GM13977 (cell line): ENCODE measurements at regions of chr16 and their contacts with region 1.

Region 1: DNA sequence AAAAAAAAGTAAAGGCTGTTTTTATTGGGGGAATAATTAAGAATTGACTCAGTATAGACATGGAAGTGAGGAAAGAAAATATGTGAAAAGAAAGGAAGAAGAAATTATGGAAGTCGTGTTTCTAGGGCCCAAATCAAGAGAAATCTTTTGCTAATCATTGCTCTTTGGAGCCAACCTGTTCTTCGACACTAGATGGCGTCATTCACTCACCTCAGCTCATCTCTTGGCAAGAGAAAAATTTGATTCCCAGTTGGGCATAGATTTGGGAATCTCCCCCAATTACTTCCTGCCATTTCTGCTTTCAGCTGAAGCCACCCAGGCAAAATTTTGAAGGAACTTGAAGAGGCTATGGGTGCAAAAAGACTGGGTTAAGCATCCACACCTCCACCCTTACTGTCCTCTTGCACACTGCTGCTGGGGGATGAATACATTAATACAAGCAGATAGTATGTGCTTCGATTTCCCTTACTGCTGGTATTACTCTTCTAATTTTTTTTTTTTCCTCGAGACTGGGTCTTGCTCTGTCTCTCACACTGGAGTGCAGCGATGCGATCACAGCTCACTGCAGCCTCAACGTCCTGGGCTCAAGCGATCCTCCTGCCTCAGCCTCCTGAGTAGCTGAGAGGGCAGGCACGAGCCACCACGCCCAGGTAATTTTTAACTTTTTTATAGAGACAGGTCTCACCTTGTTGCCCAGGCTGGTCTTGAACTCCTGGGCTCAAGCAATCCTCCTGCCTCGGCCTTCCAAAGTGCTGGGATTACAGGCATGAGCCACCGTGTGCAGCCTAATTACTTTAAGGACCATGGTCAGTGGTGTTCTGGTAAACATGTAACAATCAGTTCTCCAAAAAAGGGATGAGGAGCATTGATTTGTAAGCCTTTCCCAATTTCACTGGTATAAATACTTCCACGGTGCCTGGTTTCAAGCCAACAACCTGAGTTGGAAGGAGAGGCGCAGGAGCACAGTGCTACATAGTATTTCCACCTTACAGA is 13.5 kb downstream of the PSMD7 start:
- DNase-seq: peak; percentile 60
- CTCF ChIP-seq: peak; percentile 79

Region 2: GRCh38 chr16:74626741-74627416 is 316.8 kb after region 1 on chr16:
- in situ Hi-C with region 1: loop called (anchors 25 kb)
- DNase-seq: peak; percentile 45
- CTCF ChIP-seq: no peak